Activated naive CD4-positive, alpha-beta T cell treated with anti-CD3 and anti-CD28 coated beads for 36 hours (primary cell): ENCODE measurements at regions of chr1 and their contacts with region 1.

Region 1: GRCh38 chr1:93692983-93693591 is 11.4 kb upstream of the BCAR3 start:
- DNase-seq: peak; percentile 77
- H3K4me3 Mint-ChIP-seq: no peak overlapping the region
- H3K27ac Mint-ChIP-seq: peak overlapping the region; percentile 57
- H3K4me1 Mint-ChIP-seq: peaks cover 15% of the 10 kb centered on the region
- H3K27me3 Mint-ChIP-seq: peaks cover 11% of the 10 kb centered on the region

Region 2: GRCh38 chr1:93179886-93180722 is 513.0 kb before region 1 on chr1 and contains the start of gene TMED5:
- CTCF ChIA-PET with region 1: no interaction called
- intact Hi-C with region 1: loop called (anchors 1 kb)
- DNase-seq: peak; percentile 98
- H3K4me3 Mint-ChIP-seq: peak within 1 kb of the TSS; percentile 88
- H3K27ac Mint-ChIP-seq: peak within 1 kb of the TSS; percentile 99
- H3K4me1 Mint-ChIP-seq: peaks cover 49% of the 10 kb centered on the region
- H3K27me3 Mint-ChIP-seq: no peaks in the 10 kb centered on the region
- total RNA-seq, gene TMED5: 27.8 to 28.2 TPM

Region 3: GRCh38 chr1:93579891-93580290 is 113.2 kb before region 1 on chr1:
- CTCF ChIA-PET with region 1: no interaction called
- intact Hi-C with region 1: no loop called
- DNase-seq: no peak
- H3K4me3 Mint-ChIP-seq: no peak overlapping the region
- H3K27ac Mint-ChIP-seq: no peak overlapping the region
- H3K4me1 Mint-ChIP-seq: no peaks in the 10 kb centered on the region
- H3K27me3 Mint-ChIP-seq: no peaks in the 10 kb centered on the region

Region 4: GRCh38 chr1:93615582-93616150 is 77.4 kb before region 1 on chr1:
- CTCF ChIA-PET with region 1: no interaction called
- intact Hi-C with region 1: loop called (anchors 1 kb)
- DNase-seq: peak; percentile 76
- H3K4me3 Mint-ChIP-seq: no peak overlapping the region
- H3K27ac Mint-ChIP-seq: no peak overlapping the region
- H3K4me1 Mint-ChIP-seq: peaks cover 17% of the 10 kb centered on the region
- H3K27me3 Mint-ChIP-seq: peaks cover 3% of the 10 kb centered on the region

Region 5: DNA sequence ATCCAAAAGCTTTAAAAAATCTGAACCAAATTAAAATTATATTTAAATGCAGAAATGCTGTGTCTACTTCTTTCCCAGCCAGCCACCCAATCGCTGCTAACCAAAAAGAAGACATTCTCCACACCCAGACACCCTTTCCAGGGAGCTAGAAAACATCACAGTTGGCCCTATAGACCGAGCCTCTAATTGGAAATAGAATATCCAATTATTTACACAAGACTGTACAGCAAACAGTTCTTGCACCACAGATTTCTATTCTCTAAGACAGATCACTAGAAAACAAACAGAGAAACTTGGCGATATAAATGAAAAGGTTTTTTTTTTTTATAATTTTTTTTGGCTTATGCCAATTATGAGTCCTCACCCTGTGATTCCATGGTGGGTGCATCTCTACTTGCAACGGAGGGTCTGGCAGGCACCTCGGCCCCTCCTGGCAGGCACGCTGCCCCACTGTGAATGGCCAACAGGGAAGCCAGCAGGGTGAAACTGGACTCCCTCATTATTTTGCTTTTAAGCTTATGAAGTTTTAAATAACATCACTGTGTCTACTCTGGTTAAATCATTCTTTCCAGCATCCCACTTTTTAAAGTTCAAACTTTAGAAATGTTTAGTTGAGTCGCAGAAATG is 40.7 kb before region 1 on chr1:
- CTCF ChIA-PET with region 1: no interaction called
- intact Hi-C with region 1: no loop called
- DNase-seq: no peak
- H3K4me3 Mint-ChIP-seq: no peak overlapping the region
- H3K27ac Mint-ChIP-seq: no peak overlapping the region
- H3K4me1 Mint-ChIP-seq: no peaks in the 10 kb centered on the region
- H3K27me3 Mint-ChIP-seq: no peaks in the 10 kb centered on the region

Region 6: DNA sequence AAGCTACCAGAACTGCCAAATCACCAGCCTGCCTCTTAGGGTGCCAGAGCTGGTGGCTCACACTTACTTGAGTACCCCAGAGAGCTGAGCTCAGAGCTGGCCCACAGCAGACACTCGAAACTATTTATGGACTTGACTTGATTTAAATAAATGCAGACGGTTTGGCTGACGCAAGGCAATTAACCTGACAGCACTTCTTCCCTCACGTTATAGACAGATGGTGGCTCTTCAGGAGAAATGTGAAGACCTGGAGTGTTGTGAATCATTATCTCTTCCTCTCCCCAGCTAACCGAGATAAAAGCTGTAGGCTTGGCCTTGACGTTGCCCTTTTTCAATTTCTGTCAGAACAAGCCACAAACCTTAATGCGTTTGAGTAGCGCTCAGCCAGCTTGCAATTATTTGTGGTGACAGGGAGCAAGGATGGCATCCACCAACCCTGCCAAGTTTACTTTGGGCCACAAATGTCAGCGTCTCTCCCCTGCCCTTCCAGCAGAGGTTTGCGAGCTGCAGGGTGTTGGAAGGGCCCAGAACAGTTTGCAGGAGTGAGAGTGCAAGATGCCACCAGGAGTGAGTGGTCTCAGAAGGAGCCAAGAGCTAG is 22.5 kb after region 1 on chr1:
- CTCF ChIA-PET with region 1: interaction called, 3 read pairs
- intact Hi-C with region 1: loop called (anchors 1 kb)
- DNase-seq: peak; percentile 55
- H3K4me3 Mint-ChIP-seq: no peak overlapping the region
- H3K27ac Mint-ChIP-seq: peak overlapping the region; percentile 16
- H3K4me1 Mint-ChIP-seq: peaks cover 21% of the 10 kb centered on the region
- H3K27me3 Mint-ChIP-seq: peaks cover 13% of the 10 kb centered on the region

Region 7: DNA sequence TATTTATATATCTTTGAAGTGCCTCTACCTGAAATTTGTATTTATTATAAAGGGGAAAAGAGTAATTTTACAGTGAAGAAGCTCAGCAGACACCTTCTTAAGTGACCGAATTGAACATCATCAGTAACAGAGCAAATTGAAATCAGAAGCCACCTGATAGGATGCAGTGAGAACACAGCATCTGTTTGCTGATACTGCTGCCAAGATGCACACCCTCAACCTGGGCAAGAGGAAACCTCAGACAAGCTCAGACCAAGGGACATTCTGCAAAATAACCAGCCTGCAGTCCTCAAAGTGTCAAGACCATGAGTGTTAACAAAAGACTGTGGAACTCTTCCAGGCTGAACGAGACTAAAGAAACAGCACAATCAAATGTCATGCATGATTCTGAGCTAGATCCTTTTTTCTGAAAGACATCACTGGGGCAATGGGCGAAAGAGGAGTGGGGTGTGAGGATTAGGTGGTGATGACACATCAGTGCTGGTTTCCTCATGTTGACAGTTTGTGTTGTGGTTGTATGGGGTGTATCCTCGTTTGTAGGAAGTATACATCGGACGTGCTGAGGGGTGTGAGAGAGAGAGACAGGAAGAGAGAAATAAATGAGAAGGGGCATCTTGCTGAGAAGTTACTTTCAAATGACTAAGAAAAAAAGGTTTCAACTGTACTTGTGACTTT is 324.2 kb after region 1 on chr1:
- CTCF ChIA-PET with region 1: no interaction called
- intact Hi-C with region 1: loop called (anchors 1 kb)
- DNase-seq: peak; percentile 48
- H3K4me3 Mint-ChIP-seq: no peak overlapping the region
- H3K27ac Mint-ChIP-seq: no peak overlapping the region
- H3K4me1 Mint-ChIP-seq: peaks cover 6% of the 10 kb centered on the region
- H3K27me3 Mint-ChIP-seq: no peaks in the 10 kb centered on the region

Region 8: DNA sequence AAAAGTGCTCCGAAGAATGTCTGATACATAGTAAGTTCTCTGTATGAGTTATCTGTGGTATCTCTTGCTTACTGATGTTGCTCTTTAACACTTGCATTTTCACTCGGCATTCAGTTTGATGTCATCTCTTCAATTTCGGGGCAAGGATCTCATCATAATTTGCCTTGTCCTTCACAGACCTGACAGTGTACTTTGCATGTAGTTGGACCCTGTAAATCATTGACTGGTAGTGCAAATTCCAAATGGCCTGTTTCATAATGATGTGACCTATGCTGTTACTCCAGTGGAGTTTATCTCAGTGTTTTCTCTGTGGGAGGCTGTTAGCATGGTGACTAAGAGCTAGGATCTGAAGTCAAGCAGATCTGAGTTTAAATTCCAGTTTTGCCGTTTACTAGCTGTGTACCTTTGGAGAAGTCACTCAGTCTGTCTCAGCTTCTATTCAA is 690.9 kb after region 1 on chr1:
- CTCF ChIA-PET with region 1: no interaction called
- intact Hi-C with region 1: loop called (anchors 1 kb)
- DNase-seq: peak; percentile 48
- H3K4me3 Mint-ChIP-seq: peak overlapping the region; percentile 5
- H3K27ac Mint-ChIP-seq: peak overlapping the region; percentile 85
- H3K4me1 Mint-ChIP-seq: peaks cover 32% of the 10 kb centered on the region
- H3K27me3 Mint-ChIP-seq: peaks cover 4% of the 10 kb centered on the region